Thyroid gland (tissue), 4 donors: ENCODE measurements at regions of chr4 and their contacts with region 1.

Region 1: DNA sequence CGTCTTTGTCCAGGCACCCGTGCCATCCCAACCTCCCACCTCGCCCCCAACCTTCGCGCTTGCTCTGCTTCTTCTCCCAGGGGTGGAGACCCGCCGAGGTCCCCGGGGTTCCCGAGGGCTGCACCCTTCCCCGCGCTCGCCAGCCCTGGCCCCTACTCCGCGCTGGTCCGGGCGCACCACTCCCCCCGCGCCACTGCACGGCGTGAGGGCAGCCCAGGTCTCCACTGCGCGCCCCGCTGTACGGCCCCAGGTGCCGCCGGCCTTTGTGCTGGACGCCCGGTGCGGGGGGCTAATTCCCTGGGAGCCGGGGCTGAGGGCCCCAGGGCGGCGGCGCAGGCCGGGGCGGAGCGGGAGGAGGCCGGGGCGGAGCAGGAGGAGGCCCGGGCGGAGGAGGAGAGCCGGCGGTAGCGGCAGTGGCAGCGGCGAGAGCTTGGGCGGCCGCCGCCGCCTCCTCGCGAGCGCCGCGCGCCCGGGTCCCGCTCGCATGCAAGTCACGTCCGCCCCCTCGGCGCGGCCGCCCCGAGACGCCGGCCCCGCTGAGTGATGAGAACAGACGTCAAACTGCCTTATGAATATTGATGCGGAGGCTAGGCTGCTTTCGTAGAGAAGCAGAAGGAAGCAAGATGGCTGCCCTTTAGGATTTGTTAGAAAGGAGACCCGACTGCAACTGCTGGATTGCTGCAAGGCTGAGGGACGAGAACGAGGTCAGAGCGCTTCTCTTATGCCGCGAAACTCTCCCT is at the start of gene TET2:
- DNase-seq: peak; percentile 77
- H3K4me3 ChIP-seq: peak within 1 kb of the TSS; percentile 23 to 82 (median 67)
- H3K27ac ChIP-seq: peak within 1 kb of the TSS; percentile 29 to 87 (median 74)
- H3K4me1 ChIP-seq: peaks cover 0 to 18% of the 10 kb centered on the region in 2 donors
- H3K27me3 ChIP-seq: no peaks in the 10 kb centered on the region
- CTCF ChIP-seq: peak in 2 of 6 experiments; percentile 6 to 10
- POLR2A ChIP-seq: peak in 1 of 2 donors; percentile 86
- total RNA-seq, gene TET2: 27.4 to 40.5 (median 32.4) TPM

Region 2: GRCh38 chr4:105122350-105122749 is 24.1 kb before region 1 on chr4:
- intact Hi-C with region 1: no loop called
- DNase-seq: no peak
- H3K4me3 ChIP-seq: no peak overlapping the region
- H3K27ac ChIP-seq: no peak overlapping the region
- H3K4me1 ChIP-seq: no peaks in the 10 kb centered on the region
- H3K27me3 ChIP-seq: no peaks in the 10 kb centered on the region
- CTCF ChIP-seq: no peak
- POLR2A ChIP-seq: no peak

Region 3: DNA sequence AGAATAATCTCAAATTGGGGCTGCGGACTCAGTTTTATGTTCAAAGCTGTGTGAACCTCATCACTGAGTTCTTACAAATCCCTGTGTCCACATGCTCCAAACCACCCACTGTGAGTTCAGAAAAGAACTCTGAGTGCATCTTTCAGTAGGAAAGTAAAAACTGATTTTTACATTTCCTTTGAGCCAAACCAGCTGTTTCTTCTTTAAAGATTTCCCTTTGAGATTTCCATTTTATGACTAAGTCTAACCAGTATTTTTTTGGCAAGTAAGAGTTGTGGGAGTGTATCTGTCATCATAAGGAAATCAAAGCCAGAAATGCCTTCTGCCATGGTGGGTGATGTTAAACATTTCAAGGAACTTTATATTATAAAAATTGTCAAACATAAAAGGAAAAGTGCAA is 100.3 kb after region 1 on chr4:
- intact Hi-C with region 1: loop called (anchors 10 kb)
- DNase-seq: no peak
- H3K4me3 ChIP-seq: no peak overlapping the region
- H3K27ac ChIP-seq: no peak overlapping the region
- H3K4me1 ChIP-seq: no peaks in the 10 kb centered on the region
- H3K27me3 ChIP-seq: no peaks in the 10 kb centered on the region
- CTCF ChIP-seq: no peak
- POLR2A ChIP-seq: no peak

Region 4: DNA sequence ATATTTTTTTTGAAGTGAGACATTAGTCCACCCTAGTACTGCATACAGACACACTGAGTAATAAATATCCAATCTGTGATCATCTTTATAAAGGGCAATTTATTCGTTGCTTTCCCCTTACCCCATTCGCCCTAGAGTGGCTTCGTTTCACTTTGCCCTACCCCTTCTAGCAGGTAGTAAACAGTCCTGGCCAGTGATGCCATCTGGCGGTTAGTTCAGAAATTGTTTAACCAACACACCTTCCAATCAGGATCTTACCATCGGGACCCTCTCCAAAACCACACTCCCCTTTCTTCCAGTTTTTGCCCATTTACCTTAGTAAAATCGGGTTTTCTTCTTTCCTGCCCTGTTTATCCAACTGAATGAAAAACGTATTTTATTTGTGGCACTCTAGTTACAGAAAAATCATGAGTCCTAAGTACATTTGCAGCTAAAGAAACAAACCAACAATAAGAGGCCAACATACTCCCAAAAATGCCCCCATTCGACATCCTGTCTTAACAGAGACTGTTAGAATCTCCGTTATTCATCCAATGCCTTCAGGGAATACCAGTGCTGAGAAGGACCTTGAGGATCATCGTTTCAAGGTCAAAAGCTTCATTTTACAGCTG is 325.2 kb after region 1 on chr4:
- intact Hi-C with region 1: loop called (anchors 5 kb)
- DNase-seq: peak; percentile 66 to 75
- H3K4me3 ChIP-seq: peak overlapping the region in 1 of 3 donors; percentile 82
- H3K27ac ChIP-seq: peak overlapping the region in 2 of 3 donors; percentile 98
- H3K4me1 ChIP-seq: peaks cover 14 to 19% of the 10 kb centered on the region in 2 donors
- H3K27me3 ChIP-seq: no peaks in the 10 kb centered on the region
- CTCF ChIP-seq: peak in 5 of 6 experiments; percentile 37 to 87 (median 68)
- POLR2A ChIP-seq: no peak